Calu3 (cell line): ENCODE measurements at regions of chr12 and their contacts with region 1.

Region 1: GRCh38 chr12:10749700-10750384 is 26.7 kb upstream of the YBX3 start:
- DNase-seq: peak; percentile 81
- H3K4me3 Mint-ChIP-seq: peak overlapping the region; percentile 57
- H3K27ac Mint-ChIP-seq: no peak overlapping the region
- H3K4me1 Mint-ChIP-seq: peaks cover 27% of the 10 kb centered on the region
- H3K27me3 Mint-ChIP-seq: no peaks in the 10 kb centered on the region
- CTCF ChIP-seq: peak; percentile 79

Region 2: DNA sequence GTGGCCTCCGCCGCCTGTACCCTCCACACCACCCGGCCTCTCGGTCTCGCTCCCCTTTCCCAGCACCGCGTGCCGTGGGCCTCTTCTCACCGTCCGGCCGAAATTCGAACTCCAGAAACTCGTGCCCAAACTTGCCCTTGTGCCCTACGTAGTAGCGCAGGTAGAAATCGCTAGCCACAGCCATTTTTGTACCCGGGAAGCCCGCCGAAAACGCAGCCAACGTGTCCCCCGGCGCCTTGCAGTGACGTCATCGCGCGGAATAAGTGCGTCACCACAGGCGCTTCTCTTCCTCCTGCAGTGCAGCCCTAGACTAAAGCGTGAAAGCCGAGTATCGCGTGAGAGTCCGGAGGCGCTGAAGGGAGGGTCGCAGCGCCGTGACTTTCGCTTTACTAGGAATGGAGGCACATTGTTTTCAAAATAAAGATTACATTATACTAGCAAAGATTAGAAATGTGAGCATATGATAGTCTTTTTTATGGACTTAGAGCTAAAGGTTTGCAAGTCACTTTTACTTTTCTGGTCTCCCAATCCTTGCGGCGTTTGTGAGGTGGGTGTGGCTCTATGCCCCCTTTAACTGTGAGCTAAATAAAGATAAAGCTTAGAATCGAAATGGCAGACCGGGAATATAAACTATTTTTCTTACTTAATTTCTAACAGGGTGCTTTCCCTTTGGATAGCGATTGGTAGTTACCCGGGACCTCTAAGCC is 136.3 kb before region 1 on chr12 and contains the start of gene MAGOHB:
- CTCF ChIA-PET with region 1: no interaction called
- intact Hi-C with region 1: loop called (anchors 5 kb)
- DNase-seq: peak; percentile 98
- H3K4me3 Mint-ChIP-seq: peak within 1 kb of the TSS; percentile 93
- H3K27ac Mint-ChIP-seq: peak within 1 kb of the TSS; percentile 100
- H3K4me1 Mint-ChIP-seq: peaks cover 21% of the 10 kb centered on the region
- H3K27me3 Mint-ChIP-seq: no peaks in the 10 kb centered on the region
- CTCF ChIP-seq: no peak
- total RNA-seq, gene MAGOHB: 59.5 and 61.4 TPM in 2 replicates

Region 3: GRCh38 chr12:10716704-10717315 is 33.0 kb before region 1 on chr12:
- CTCF ChIA-PET with region 1: no interaction called
- intact Hi-C with region 1: loop called (anchors 2 kb)
- DNase-seq: peak; percentile 87
- H3K4me3 Mint-ChIP-seq: peak overlapping the region; percentile 53
- H3K27ac Mint-ChIP-seq: peak overlapping the region; percentile 47
- H3K4me1 Mint-ChIP-seq: peaks cover 45% of the 10 kb centered on the region
- H3K27me3 Mint-ChIP-seq: no peaks in the 10 kb centered on the region
- CTCF ChIP-seq: no peak

Region 4: DNA sequence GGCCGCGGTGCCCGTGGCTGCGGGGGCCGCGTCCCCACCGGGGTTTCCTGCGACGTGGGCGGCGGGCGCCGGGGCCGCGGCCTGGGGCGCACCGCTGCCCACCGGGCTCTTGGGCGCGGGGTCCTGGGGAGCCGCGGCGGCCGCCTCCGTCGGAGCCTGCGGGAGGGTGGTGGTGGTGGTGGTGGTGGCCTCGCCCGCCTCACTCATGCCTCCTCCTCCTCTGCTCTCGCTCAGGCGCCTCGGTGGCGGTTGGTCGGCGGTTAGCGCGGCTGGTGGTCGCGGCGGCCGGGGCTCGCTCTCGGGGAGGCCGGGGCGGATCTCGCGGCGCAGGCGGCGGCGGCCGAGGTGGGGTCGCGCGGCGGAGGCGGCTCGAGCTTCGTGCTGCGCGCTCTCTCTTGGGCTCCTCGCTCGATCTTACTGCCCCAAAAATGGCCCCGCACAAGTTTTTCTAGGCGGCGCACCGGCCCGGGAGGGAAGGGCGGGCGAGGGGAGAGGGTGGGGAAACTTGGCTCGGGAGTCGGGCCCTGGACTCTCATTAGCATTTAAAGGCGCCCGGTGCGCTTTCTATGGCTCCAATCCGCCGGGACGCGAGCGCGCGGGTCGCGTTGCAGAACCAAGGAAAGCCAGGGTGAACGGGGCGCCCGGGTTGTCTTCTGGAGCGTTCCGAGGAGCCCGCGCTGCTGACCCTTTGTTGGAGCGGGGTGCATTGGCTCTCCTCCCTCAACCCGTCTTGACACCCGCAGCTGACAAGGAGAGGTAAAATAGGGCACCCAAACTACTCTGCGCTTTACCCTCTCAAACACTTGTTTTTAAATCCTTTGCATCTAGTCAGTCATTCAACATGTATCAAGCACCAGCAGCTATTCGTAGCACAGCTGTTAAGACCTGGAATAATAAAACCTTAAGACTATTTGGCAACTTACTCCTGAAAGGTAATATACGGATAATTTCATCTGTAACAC is 26.7 kb before region 1 on chr12 and contains the start of gene YBX3:
- CTCF ChIA-PET with region 1: interaction called, 12 read pairs
- intact Hi-C with region 1: no loop called
- DNase-seq: peak; percentile 85
- H3K4me3 Mint-ChIP-seq: peak within 1 kb of the TSS; percentile 89
- H3K27ac Mint-ChIP-seq: peak within 1 kb of the TSS; percentile 97
- H3K4me1 Mint-ChIP-seq: peaks cover 17% of the 10 kb centered on the region
- H3K27me3 Mint-ChIP-seq: no peaks in the 10 kb centered on the region
- CTCF ChIP-seq: no peak
- total RNA-seq, gene YBX3: 295 and 312 TPM in 2 replicates

Region 5: GRCh38 chr12:11658791-11659190 is 908.9 kb after region 1 on chr12:
- CTCF ChIA-PET with region 1: no interaction called
- intact Hi-C with region 1: no loop called
- DNase-seq: no peak
- H3K4me3 Mint-ChIP-seq: no peak overlapping the region
- H3K27ac Mint-ChIP-seq: no peak overlapping the region
- H3K4me1 Mint-ChIP-seq: peaks cover 77% of the 10 kb centered on the region
- H3K27me3 Mint-ChIP-seq: no peaks in the 10 kb centered on the region
- CTCF ChIP-seq: no peak